IMR-90 (cell line): ENCODE measurements at regions of chrX and their contacts with region 1.

Region 1: DNA sequence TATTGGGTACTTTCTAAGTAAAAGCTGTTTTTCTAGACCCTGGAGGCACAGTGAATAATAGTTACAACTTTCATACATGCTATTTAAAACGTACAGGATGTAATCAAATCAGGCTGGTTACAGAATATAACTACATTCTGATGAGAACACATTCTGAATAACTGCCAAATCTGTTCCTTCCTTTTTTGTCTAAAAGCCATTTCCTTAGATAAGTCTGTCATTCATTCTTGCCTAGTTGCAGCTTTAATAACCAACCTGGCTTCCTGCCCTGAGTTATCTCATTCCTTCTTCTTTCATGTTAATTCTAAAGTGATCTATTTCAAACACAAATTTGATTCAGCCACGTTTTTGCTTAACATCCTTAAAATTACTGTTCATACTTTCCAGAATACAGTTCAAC is 189.7 kb upstream of the ITM2A start:
- DNase-seq: no peak
- ATAC-seq: no peak
- H3K4me3 ChIP-seq: no peak overlapping the region
- H3K27ac ChIP-seq: no peak overlapping the region
- H3K4me1 ChIP-seq: no peaks in the 10 kb centered on the region
- H3K27me3 ChIP-seq: no peaks in the 10 kb centered on the region
- CTCF ChIP-seq: no peak
- POLR2A ChIP-seq: no peak
- RAD21 ChIP-seq: no peak

Region 2: DNA sequence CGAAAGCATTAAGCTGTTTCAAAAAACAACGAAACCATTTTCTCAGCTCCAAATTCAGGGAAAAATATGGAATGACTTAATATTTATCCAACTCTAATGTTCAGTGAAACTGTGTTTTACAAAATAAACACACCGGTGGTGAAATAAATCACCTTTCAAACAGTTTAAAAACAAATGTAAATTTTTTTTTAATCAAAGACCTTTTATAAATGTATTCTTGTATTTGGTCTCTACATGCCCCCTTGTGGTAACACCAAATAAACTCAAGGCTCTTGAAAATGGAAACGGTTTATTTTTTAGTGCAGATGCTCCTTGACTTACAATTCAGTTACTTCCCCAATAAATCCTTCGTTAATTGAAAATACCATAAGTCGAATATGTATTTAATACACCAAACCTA is 143.8 kb before region 1 on chrX:
- CTCF ChIA-PET with region 1: no interaction called
- POLR2A ChIA-PET with region 1: no interaction called
- dilution Hi-C with region 1: no loop called
- in situ Hi-C with region 1: no loop called
- intact Hi-C with region 1: no loop called
- DNase-seq: peak; percentile 1
- ATAC-seq: no peak
- H3K4me3 ChIP-seq: no peak overlapping the region
- H3K27ac ChIP-seq: no peak overlapping the region
- H3K4me1 ChIP-seq: no peaks in the 10 kb centered on the region
- H3K27me3 ChIP-seq: no peaks in the 10 kb centered on the region
- CTCF ChIP-seq: peak; percentile 34
- POLR2A ChIP-seq: no peak
- RAD21 ChIP-seq: no peak

Region 3: GRCh38 chrX:79601341-79602131 is 44.7 kb after region 1 on chrX:
- CTCF ChIA-PET with region 1: no interaction called
- POLR2A ChIA-PET with region 1: no interaction called
- dilution Hi-C with region 1: no loop called
- in situ Hi-C with region 1: no loop called
- intact Hi-C with region 1: loop called (anchors 2 kb)
- DNase-seq: no peak
- ATAC-seq: no peak
- H3K4me3 ChIP-seq: no peak overlapping the region
- H3K27ac ChIP-seq: no peak overlapping the region
- H3K4me1 ChIP-seq: no peaks in the 10 kb centered on the region
- H3K27me3 ChIP-seq: no peaks in the 10 kb centered on the region
- CTCF ChIP-seq: no peak
- POLR2A ChIP-seq: no peak
- RAD21 ChIP-seq: no peak